Calu3 (cell line): ENCODE measurements at regions of chr6 and their contacts with region 1.

Region 1: GRCh38 chr6:24666641-24667377 is at the starts of genes ACOT13 and TDP2:
- DNase-seq: peak; percentile 99
- H3K4me3 Mint-ChIP-seq: peak within 1 kb of the TSS; percentile 87
- H3K27ac Mint-ChIP-seq: peak within 1 kb of the TSS; percentile 90
- H3K4me1 Mint-ChIP-seq: peaks cover 40% of the 10 kb centered on the region
- H3K27me3 Mint-ChIP-seq: no peaks in the 10 kb centered on the region
- CTCF ChIP-seq: peak; percentile 74
- total RNA-seq, gene ACOT13: 74.5 and 78.9 TPM in 2 replicates
- total RNA-seq, gene TDP2: 71.7 and 72.9 TPM in 2 replicates

Region 2: DNA sequence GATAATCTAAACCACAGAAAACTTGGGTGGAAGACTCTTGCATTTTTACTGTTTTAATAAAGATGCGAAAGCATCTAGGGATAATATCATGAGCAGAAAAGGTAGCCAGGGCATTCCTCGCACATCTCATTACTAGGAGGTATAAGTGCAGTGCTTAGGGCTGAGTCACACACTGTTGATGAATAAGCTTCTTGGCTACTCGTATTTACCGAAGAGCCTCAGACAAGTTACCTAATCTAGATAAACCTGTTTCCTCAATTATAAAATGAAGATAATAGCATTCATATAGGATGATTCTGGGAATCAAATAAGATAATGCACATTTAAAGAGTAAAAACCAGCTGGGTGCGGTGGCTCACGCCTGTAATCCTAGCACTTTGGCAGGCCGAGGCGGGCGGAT is 20.0 kb before region 1 on chr6:
- CTCF ChIA-PET with region 1: interaction called, 10 read pairs
- intact Hi-C with region 1: no loop called
- DNase-seq: peak; percentile 60
- H3K4me3 Mint-ChIP-seq: peak overlapping the region; percentile 96
- H3K27ac Mint-ChIP-seq: peak overlapping the region; percentile 80
- H3K4me1 Mint-ChIP-seq: peaks cover 38% of the 10 kb centered on the region
- H3K27me3 Mint-ChIP-seq: no peaks in the 10 kb centered on the region
- CTCF ChIP-seq: no peak